AG04449 (cell line): ENCODE measurements at regions of chr5 and their contacts with region 1.

Region 1: GRCh38 chr5:73482383-73483136 is 15.7 kb upstream of the BTF3 start:
- DNase-seq: peak; percentile 50
- H3K4me3 ChIP-seq: no peak overlapping the region
- CTCF ChIP-seq: no peak

Region 2: GRCh38 chr5:73498057-73499008 is 15.8 kb after region 1 on chr5 and contains the start of gene BTF3:
- CTCF ChIA-PET with region 1: interaction called, 18 read pairs
- POLR2A ChIA-PET with region 1: interaction called, 3 read pairs
- DNase-seq: peak; percentile 80
- H3K4me3 ChIP-seq: peak within 1 kb of the TSS; percentile 87
- CTCF ChIP-seq: no peak